Esophagus squamous epithelium (tissue), 5 donors: ENCODE measurements at regions of chr1 and their contacts with region 1.

Region 1: GRCh38 chr1:201254625-201255506 is 28.4 kb upstream of the PKP1 start:
- DNase-seq: no peak
- H3K4me3 ChIP-seq: no peak overlapping the region
- H3K27ac ChIP-seq: peak overlapping the region in 3 of 4 donors; percentile 15 to 73 (median 33)
- H3K4me1 ChIP-seq: peaks cover 12 to 34% (median 14%) of the 10 kb centered on the region in 3 donors
- H3K27me3 ChIP-seq: peaks cover 0 to 23% (median 0%) of the 10 kb centered on the region in 4 donors
- CTCF ChIP-seq: peak; percentile 80 to 99 (median 98)
- POLR2A ChIP-seq: no peak

Region 2: DNA sequence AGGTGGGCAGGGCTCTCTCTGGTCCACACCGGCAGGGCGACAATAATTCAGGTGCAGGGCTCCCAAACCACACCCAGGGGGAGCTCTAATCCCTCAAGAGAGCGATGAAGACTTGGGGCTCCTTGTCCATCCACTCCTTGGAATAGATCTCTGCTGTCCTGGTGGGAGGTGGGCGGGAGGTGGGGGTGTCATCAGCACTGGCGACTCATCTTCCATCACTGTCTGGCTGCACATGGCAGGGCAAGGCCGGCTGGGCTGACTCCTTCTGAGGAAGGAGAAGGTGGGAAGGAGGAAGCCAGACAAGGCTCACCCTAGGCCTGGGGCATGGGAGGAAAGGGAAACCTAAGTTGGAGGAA is 93.3 kb after region 1 on chr1:
- intact Hi-C with region 1: loop called (anchors 5 kb)
- DNase-seq: no peak
- H3K4me3 ChIP-seq: no peak overlapping the region
- H3K27ac ChIP-seq: peak overlapping the region in 2 of 4 donors; percentile 85 to 87
- H3K4me1 ChIP-seq: peaks cover 22 to 73% (median 32%) of the 10 kb centered on the region in 3 donors
- H3K27me3 ChIP-seq: peaks cover 0 to 16% (median 0%) of the 10 kb centered on the region in 4 donors
- CTCF ChIP-seq: peak in 5 of 6 experiments; percentile 44 to 78 (median 54)
- POLR2A ChIP-seq: no peak

Region 3: DNA sequence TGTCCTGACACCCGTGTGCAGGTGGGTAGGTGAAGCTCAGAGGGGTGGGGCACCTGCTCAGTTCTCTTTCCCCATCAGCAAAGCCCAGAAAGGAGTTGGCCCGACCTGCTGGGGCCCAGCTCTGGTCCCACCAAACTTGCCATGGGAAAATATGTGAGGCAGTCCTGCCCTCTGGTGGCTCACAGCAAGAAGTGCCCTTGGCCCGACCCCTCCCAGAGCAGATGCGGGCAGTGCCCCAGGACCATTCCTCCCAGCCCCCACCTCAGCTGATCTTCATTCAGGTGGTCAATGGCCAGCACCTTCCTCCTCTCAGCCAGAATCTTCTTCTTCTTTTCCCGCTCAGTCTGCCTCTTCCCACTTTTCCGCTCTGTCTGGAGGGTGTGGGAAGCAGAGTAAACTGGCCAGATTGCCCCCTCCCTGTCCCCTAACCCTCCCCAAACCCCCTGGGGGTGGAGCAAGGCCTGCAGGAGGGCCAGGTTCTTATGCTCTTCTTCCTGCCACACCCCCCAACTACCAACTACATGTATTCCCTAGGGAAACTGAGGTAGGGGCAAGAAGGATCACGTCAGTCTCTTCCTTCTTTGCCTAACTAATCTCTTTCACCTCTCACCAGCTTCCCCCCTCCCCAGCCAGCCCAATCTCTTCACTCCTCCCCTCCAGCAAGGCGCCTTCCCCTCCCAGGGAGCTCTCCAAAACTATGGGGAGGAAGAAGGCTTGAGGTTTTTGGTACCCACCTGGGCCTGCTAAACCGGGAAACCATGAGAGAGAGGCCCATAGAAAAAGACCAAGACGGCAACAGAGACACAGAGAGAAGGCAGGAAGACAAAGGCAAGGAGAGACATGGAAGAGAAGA is 107.0 kb after region 1 on chr1:
- intact Hi-C with region 1: loop called (anchors 5 kb)
- DNase-seq: no peak
- H3K4me3 ChIP-seq: no peak overlapping the region
- H3K27ac ChIP-seq: no peak overlapping the region
- H3K4me1 ChIP-seq: peaks cover 10 to 19% (median 13%) of the 10 kb centered on the region in 3 donors
- H3K27me3 ChIP-seq: peaks cover 0 to 14% (median 0%) of the 10 kb centered on the region in 4 donors
- CTCF ChIP-seq: peak; percentile 42 to 91 (median 80)
- POLR2A ChIP-seq: no peak